ENCODE measurements at regions of chr3 and their contacts with region 1.

Region 1: DNA sequence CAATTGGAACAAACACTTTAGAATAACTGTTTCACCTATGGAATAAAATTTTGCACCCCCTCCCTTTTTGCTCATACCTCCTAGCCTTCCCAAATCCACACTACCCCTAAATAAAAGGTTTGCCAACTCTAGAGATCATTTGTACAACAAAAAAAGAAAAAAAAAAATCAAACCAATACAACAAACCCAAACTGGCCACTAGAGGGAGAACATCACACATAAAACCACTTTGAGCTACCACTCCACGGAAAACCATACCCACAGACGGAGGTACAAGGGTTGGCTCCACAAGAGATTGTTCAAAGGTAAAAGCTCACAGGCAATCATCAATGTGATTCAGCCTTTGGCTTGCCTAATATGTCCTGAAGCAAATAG is 47.6 kb downstream of the SETMAR start:
- DNase-seq: no peak
- H3K4me3 ChIP-seq: peak overlapping the region; percentile 42 to 44
- H3K27ac ChIP-seq: peak overlapping the region; percentile 64 to 83
- H3K4me1 ChIP-seq: peaks cover 0 to 15% (median 0%) of the 10 kb centered on the region in 4 donors
- H3K27me3 ChIP-seq: no peaks in the 10 kb centered on the region
- CTCF ChIP-seq: peak; percentile 64 to 68

Region 2: DNA sequence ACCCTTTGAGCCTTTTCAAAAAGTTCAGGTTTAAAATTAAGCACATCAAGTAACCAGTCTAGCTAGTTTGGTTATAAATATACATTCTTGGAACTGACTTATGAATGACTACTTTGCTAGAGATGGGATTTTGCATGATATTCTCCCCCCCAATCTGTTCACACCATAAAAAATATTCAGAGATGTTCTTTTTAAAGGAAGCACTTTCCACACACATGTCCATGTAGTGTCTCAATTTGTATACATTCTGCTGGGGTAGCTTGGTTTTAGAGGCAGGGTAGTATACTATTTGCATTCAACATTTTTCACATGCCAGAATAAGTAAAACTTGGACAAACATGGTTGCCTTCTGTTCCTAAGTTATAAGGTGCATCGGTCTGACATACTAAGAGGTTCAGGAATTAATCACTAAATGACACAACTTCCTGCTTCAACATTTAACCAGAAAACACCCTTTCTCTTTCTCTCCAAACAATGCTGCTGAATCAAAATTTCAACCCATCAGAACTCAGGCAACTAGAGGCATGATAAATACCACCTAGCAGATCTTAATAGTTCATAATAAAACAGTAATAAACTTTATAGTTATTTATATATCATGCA is 59.3 kb after region 1 on chr3:
- intact Hi-C with region 1: loop called (anchors 2 kb)
- DNase-seq: no peak
- H3K4me3 ChIP-seq: no peak overlapping the region
- H3K27ac ChIP-seq: peak overlapping the region; percentile 1 to 37
- H3K4me1 ChIP-seq: peaks cover 0 to 30% (median 5%) of the 10 kb centered on the region in 4 donors
- H3K27me3 ChIP-seq: no peaks in the 10 kb centered on the region
- CTCF ChIP-seq: no peak

Region 3: GRCh38 chr3:4474683-4475490 is 124.1 kb after region 1 on chr3:
- intact Hi-C with region 1: loop called (anchors 10 kb)
- DNase-seq: peak; percentile 57 to 88
- H3K4me3 ChIP-seq: no peak overlapping the region
- H3K27ac ChIP-seq: peak overlapping the region; percentile 63 to 78
- H3K4me1 ChIP-seq: peaks cover 0 to 14% (median 10%) of the 10 kb centered on the region in 4 donors
- H3K27me3 ChIP-seq: no peaks in the 10 kb centered on the region
- CTCF ChIP-seq: no peak

Region 4: GRCh38 chr3:4584456-4585249 is 233.9 kb after region 1 on chr3:
- intact Hi-C with region 1: loop called (anchors 5 kb)
- DNase-seq: peak; percentile 34 to 74
- H3K4me3 ChIP-seq: peak overlapping the region; percentile 40 to 48
- H3K27ac ChIP-seq: peak overlapping the region; percentile 69 to 82
- H3K4me1 ChIP-seq: peaks cover 0 to 92% (median 53%) of the 10 kb centered on the region in 4 donors
- H3K27me3 ChIP-seq: no peaks in the 10 kb centered on the region
- CTCF ChIP-seq: peak in 1 of 2 experiments; percentile 33

Region 5: GRCh38 chr3:4633078-4634004 is 282.6 kb after region 1 on chr3:
- intact Hi-C with region 1: loop called (anchors 2 kb)
- DNase-seq: no peak
- H3K4me3 ChIP-seq: no peak overlapping the region
- H3K27ac ChIP-seq: peak overlapping the region; percentile 36 to 51
- H3K4me1 ChIP-seq: peaks cover 0 to 10% (median 3%) of the 10 kb centered on the region in 4 donors
- H3K27me3 ChIP-seq: no peaks in the 10 kb centered on the region
- CTCF ChIP-seq: peak; percentile 75 to 83

Measured in tibial artery (tissue), 4 donors.